Activated CD4-positive, alpha-beta memory T cell treated with anti-CD3 and anti-CD28 coated beads for 36 hours (primary cell): ENCODE measurements at regions of chr14 and their contacts with region 1.

Region 1: DNA sequence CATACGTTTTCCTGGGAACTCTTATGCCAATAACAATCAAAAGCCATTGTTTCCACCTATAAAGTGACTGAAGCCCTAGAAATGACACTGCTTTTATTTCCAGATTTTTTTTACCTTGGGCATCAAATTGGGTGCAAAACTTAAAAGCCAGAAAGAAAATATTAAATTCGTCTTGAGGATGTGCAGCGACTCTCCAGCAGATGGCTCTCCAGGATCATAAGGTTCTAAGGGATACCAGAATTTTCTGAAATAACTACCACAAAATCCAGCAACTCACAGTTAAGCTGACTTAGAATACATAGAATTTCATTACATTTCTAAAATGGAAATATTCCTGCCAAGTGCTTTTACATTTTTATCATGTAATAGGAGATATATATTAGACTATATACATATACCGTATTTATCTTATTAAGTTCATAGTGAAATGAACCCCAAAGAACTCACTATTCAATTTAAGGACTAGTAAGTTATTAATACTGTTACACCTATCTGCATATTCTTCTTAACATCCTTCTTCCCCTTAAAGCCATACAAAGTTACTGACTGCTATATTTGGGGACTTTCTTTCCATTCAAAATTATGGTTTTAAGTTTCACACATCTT is 44.0 kb downstream of the ARMH4 start:
- DNase-seq: peak; percentile 49
- H3K4me3 Mint-ChIP-seq: no peak overlapping the region
- H3K27ac Mint-ChIP-seq: no peak overlapping the region
- H3K4me1 Mint-ChIP-seq: peaks cover 6% of the 10 kb centered on the region
- H3K27me3 Mint-ChIP-seq: peaks cover 9% of the 10 kb centered on the region

Region 2: DNA sequence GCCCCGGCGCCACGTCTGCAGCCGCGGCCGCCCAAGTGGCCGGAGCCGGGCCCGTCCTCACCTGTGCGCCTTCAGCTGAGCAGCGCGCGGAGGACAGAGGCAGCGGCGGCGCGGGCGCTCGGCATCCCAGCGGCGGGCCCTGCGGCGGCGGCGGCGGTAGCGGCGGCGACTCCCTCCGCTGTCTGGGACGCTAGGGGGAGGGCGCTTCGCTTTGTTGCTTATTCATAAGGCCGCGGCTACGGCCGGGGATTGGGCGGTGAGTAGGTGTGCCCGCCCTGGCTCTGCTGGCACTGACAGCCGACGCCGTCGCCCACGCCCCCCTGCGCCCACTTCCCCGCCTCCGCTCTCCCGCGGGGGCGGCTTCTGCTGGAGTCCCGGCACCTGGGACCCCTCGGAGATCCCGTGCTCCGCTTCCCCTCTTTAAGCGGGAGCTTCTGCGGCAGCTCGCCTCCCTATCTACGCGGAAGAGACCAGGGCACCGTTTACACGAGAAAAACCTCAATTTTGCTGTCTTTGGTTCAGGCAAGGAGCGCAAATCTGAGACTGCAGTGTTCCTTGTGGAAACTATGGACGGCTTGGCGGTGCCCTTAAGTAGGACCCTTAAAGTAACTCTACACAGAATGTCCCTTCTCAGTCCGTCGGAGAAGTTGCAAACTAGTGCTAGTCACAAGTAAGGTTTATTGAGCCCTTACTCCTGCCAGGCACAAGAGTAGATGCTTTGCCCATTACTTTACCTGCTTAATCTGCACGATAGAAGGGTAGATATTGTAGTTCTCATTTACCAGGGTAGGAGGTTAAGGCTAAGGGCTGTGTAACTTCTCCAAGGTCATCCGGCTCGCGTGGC is 44.2 kb after region 1 on chr14 and contains the start of gene ARMH4:
- CTCF ChIA-PET with region 1: interaction called, 5 read pairs
- POLR2A ChIA-PET with region 1: no interaction called
- intact Hi-C with region 1: loop called (anchors 5 kb)
- DNase-seq: peak; percentile 77
- H3K4me3 Mint-ChIP-seq: peak within 1 kb of the TSS; percentile 71
- H3K27ac Mint-ChIP-seq: no peak within 1 kb of the TSS
- H3K4me1 Mint-ChIP-seq: peaks cover 16% of the 10 kb centered on the region
- H3K27me3 Mint-ChIP-seq: peaks cover 52% of the 10 kb centered on the region
- total RNA-seq, gene ARMH4: 0.29 TPM in 1 of 2 experiments, not detected in the other

Region 3: GRCh38 chr14:58166005-58166983 is 58.2 kb after region 1 on chr14:
- CTCF ChIA-PET with region 1: interaction called, 51 read pairs
- POLR2A ChIA-PET with region 1: no interaction called
- intact Hi-C with region 1: loop called (anchors 1 kb)
- DNase-seq: peak; percentile 84
- H3K4me3 Mint-ChIP-seq: no peak overlapping the region
- H3K27ac Mint-ChIP-seq: no peak overlapping the region
- H3K4me1 Mint-ChIP-seq: peaks cover 15% of the 10 kb centered on the region
- H3K27me3 Mint-ChIP-seq: peaks cover 8% of the 10 kb centered on the region

Region 4: GRCh38 chr14:58331111-58331510 is 223.1 kb after region 1 on chr14:
- CTCF ChIA-PET with region 1: no interaction called
- POLR2A ChIA-PET with region 1: no interaction called
- intact Hi-C with region 1: loop called (anchors 1 kb)
- DNase-seq: peak; percentile 88
- H3K4me3 Mint-ChIP-seq: peak overlapping the region; percentile 62
- H3K27ac Mint-ChIP-seq: peak overlapping the region; percentile 89
- H3K4me1 Mint-ChIP-seq: peaks cover 13% of the 10 kb centered on the region
- H3K27me3 Mint-ChIP-seq: no peaks in the 10 kb centered on the region

Region 5: DNA sequence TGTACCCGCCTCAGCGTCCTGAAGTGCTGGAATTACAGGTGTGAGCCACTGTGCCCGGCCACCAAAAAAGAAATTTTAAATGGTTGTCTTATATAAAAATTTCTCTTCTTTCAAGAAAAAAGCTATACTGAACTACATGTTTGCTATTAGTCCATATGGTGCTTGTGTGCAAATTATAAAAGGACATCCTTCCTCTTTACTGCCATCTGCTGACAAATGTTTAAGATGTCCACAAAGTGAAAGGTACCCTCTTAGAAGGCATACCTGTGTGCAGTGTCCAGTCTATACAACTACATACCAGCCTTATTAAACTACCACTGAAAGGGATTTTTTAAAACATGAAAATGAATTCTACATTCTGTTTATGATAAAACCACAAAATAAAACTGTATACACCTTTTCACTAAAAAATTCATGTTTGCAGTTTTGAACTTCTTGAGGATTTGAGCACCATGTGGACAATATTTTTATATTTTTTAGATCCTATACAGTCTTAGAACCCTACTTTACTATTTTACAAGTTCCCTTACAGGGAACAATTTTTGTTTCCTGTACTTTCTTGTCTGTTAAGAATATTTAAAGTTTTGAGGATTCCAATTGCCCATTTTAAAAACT is 254.9 kb after region 1 on chr14:
- CTCF ChIA-PET with region 1: no interaction called
- POLR2A ChIA-PET with region 1: no interaction called
- intact Hi-C with region 1: loop called (anchors 2 kb)
- DNase-seq: no peak
- H3K4me3 Mint-ChIP-seq: no peak overlapping the region
- H3K27ac Mint-ChIP-seq: no peak overlapping the region
- H3K4me1 Mint-ChIP-seq: peaks cover 7% of the 10 kb centered on the region
- H3K27me3 Mint-ChIP-seq: no peaks in the 10 kb centered on the region

Region 6: GRCh38 chr14:58395812-58396788 is 288.1 kb after region 1 on chr14 and contains the start of gene TOMM20L:
- CTCF ChIA-PET with region 1: interaction called, 9 read pairs
- POLR2A ChIA-PET with region 1: no interaction called
- intact Hi-C with region 1: loop called (anchors 1 kb)
- DNase-seq: peak; percentile 80
- H3K4me3 Mint-ChIP-seq: peak within 1 kb of the TSS; percentile 66
- H3K27ac Mint-ChIP-seq: peak within 1 kb of the TSS; percentile 58
- H3K4me1 Mint-ChIP-seq: peaks cover 11% of the 10 kb centered on the region
- H3K27me3 Mint-ChIP-seq: no peaks in the 10 kb centered on the region
- total RNA-seq, gene TOMM20L: not detected

Region 7: GRCh38 chr14:58455587-58456228 is 347.7 kb after region 1 on chr14:
- CTCF ChIA-PET with region 1: no interaction called
- POLR2A ChIA-PET with region 1: no interaction called
- intact Hi-C with region 1: no loop called
- DNase-seq: no peak
- H3K4me3 Mint-ChIP-seq: no peak overlapping the region
- H3K27ac Mint-ChIP-seq: no peak overlapping the region
- H3K4me1 Mint-ChIP-seq: peaks cover 3% of the 10 kb centered on the region
- H3K27me3 Mint-ChIP-seq: no peaks in the 10 kb centered on the region